Common myeloid progenitor, CD34-positive (primary cell): ENCODE measurements at regions of chr7 and their contacts with region 1.

Region 1: GRCh38 chr7:23055582-23056178 is 41.8 kb upstream of the HYCC1 start:
- DNase-seq: peak; percentile 73 to 84 (median 81)
- H3K4me3 ChIP-seq: no peak overlapping the region
- H3K27ac ChIP-seq: no peak overlapping the region
- H3K4me1 ChIP-seq: no peaks in the 10 kb centered on the region
- H3K27me3 ChIP-seq: no peaks in the 10 kb centered on the region

Region 2: DNA sequence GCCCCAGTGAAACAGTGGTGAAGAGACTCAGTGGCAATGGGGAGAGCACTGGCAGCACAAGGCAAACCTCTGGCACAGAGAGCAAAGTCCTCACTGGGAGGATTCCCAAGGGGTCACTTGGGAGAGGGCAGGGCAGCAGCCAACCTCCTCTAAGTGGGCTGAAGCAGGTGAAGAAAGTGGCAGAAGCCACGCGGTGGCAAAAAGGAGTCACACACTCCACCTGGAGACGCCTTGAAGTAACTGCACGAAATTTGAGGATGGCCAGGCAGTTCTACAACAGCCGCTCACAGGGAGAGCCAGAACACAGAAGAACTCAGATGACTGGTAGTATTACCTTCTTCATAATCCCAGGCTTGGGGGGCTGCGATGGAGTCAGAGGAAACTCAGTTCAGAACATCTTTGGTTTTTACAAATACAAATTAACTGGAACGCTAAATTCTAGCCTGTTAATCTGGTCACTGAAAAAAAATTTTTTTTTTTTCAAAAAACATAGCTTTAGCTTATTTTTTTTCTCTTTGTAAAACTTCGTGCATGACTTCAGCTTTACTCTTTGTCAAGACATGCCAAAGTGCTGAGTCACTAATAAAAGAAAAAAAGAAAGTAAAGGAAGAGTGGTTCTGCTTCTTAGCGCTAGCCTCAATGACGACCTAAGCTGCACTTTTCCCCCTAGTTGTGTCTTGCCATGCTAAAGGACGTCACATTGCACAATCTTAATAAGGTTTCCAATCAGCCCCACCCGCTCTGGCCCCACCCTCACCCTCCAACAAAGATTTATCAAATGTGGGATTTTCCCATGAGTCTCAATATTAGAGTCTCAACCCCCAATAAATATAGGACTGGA is 329.1 kb before region 1 on chr7:
- CTCF ChIA-PET with region 1: interaction called, 22 read pairs
- POLR2A ChIA-PET with region 1: no interaction called
- DNase-seq: peak; percentile 65 to 86 (median 86)
- H3K4me3 ChIP-seq: peak overlapping the region in 6 of 7 experiments; percentile 35 to 66 (median 48)
- H3K27ac ChIP-seq: peak overlapping the region in 1 of 2 experiments; percentile 56
- H3K4me1 ChIP-seq: peaks cover 6 to 37% (median 30%) of the 10 kb centered on the region in 4 experiments
- H3K27me3 ChIP-seq: peaks cover 2 to 33% (median 9%) of the 10 kb centered on the region in 5 experiments

Region 3: DNA sequence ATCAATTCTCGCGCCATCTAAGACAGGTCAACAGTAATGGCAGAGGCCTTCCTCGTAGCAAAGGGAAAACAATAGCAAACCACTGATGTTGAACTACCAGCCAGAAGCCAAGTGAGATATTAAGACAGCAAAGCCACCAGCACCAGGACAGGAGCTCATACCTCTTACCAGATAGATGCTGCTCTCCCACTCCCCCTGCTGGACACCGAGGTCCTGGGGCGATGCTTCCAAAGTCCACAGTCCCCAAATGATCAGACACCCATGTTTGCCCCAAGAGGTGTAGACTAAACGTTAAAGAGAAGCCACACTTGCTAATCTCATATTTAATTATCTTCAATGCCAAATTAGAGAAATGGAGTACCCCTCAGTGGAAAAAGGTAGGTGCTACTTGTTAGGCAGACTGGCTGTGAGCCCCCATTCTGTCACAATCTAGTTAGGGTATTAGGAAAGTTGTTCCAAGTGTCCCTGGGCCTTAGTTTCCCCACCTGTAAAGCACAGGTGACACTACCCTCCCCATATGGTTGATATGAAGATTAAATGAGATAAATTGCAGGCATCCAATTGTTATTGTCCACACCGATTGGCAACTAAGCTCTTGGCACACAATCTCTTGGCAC is 273.0 kb before region 1 on chr7:
- CTCF ChIA-PET with region 1: interaction called, 12 read pairs
- POLR2A ChIA-PET with region 1: no interaction called
- DNase-seq: peak; percentile 59 to 83 (median 74)
- H3K4me3 ChIP-seq: no peak overlapping the region
- H3K27ac ChIP-seq: no peak overlapping the region
- H3K4me1 ChIP-seq: no peaks in the 10 kb centered on the region
- H3K27me3 ChIP-seq: peaks cover 0 to 2% (median 0%) of the 10 kb centered on the region in 5 experiments

Region 4: DNA sequence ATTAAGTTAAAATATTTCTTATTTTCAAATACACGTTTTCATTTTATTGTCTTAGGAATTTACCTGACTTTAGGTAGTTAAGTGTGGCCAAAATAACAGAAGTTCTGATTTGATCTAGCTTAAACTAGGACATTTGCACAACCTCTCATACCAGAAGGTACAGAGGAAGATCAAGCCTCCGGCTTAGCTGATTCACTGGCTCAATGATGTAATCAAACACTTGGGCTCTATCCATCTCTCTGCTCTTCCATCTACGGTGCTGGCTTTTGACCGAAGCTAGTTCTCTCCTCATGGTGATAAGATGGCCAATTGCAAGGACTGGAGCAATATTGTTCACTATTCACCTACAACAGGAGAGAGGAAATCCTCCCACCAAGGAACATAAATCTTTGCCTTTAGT is 29.5 kb before region 1 on chr7:
- CTCF ChIA-PET with region 1: interaction called, 10 read pairs
- POLR2A ChIA-PET with region 1: no interaction called
- DNase-seq: no peak
- H3K4me3 ChIP-seq: no peak overlapping the region
- H3K27ac ChIP-seq: no peak overlapping the region
- H3K4me1 ChIP-seq: no peaks in the 10 kb centered on the region
- H3K27me3 ChIP-seq: no peaks in the 10 kb centered on the region

Region 5: DNA sequence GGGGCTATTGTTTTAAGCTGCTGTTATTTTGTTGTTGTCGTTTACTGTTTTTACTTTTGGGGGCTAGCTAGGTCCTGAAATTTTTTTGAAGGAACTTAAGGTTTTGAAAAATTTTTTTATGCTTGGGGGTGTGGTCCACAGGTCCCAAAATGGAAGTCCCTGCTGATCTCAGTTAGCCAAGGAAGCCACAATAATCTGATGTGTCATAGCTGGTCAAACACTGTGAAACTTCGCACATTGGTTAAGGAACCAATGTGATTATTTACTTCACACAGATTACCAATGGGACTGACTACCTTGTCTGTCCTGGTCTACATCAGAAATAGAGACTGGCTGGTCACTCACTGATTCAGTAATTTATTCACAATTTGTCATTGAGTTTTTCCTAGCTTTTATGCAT is 12.2 kb before region 1 on chr7:
- CTCF ChIA-PET with region 1: interaction called, 14 read pairs
- POLR2A ChIA-PET with region 1: no interaction called
- DNase-seq: peak in 2 of 3 donors; percentile 28 to 44
- H3K4me3 ChIP-seq: no peak overlapping the region
- H3K27ac ChIP-seq: no peak overlapping the region
- H3K4me1 ChIP-seq: peaks cover 0 to 3% (median 0%) of the 10 kb centered on the region in 4 experiments
- H3K27me3 ChIP-seq: no peaks in the 10 kb centered on the region